Naive thymus-derived CD8-positive, alpha-beta T cell (primary cell): ENCODE measurements at regions of chr7 and their contacts with region 1.

Region 1: GRCh38 chr7:150368096-150368883 is at the start of gene REPIN1:
- DNase-seq: peak; percentile 66 to 87 (median 74)
- ATAC-seq: peak; percentile 43 to 54
- H3K4me3 Mint-ChIP-seq: peak within 1 kb of the TSS; percentile 89 to 98 (median 94)
- H3K27ac Mint-ChIP-seq: peak within 1 kb of the TSS; percentile 90 to 98 (median 96)
- H3K4me1 Mint-ChIP-seq: peaks cover 21 to 65% (median 57%) of the 10 kb centered on the region in 4 donors
- H3K27me3 Mint-ChIP-seq: no peaks in the 10 kb centered on the region
- polyA plus RNA-seq, gene REPIN1: 39.8 to 73.0 (median 49.8) TPM

Region 2: DNA sequence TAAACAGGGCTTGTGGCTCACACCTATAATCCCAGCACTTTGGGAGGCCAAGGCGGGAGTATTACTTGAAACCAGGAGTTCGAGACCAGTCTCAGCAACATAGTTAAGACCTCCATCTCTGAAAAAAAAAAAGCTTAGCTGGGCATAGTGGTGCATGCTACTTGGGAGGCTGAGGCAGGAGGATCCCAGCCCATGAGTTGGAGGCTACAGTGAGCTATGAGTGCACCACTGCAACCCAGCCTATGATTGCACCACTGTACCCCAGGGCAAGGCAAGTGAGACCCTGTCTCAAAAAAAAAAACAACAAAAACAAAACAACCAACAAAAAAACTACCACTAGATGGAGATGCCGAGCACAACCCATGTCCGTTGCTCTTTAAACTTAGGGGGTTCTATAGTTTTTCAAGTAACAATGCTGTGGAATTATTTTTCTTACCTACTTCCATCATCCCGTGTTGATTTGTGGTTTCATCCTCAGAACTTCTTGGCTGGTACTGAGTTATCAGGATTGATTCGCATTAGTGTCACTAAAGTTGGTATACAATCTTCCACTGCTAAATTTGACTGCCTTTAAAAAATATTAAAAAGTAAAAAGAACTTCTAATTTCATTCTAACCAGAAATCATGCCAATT is 11.9 kb before region 1 on chr7:
- POLR2A ChIA-PET with region 1: interaction called, 41 read pairs
- DNase-seq: peak in 3 of 10 donors; percentile 62 to 64 (median 63)
- ATAC-seq: peak in 1 of 2 donors; percentile 19
- H3K4me3 Mint-ChIP-seq: peak overlapping the region in 5 of 10 donors; percentile 8 to 34 (median 18)
- H3K27ac Mint-ChIP-seq: peak overlapping the region in 9 of 10 donors; percentile 4 to 79 (median 63)
- H3K4me1 Mint-ChIP-seq: peaks cover 21 to 40% (median 35%) of the 10 kb centered on the region in 4 donors
- H3K27me3 Mint-ChIP-seq: no peaks in the 10 kb centered on the region

Region 3: GRCh38 chr7:150378853-150379440 is 10.7 kb after region 1 on chr7 and contains the start of gene ZNF775:
- POLR2A ChIA-PET with region 1: interaction called, 37 read pairs
- DNase-seq: peak; percentile 88 to 94 (median 91)
- ATAC-seq: peak; percentile 93 to 96
- H3K4me3 Mint-ChIP-seq: peak within 1 kb of the TSS; percentile 82 to 95 (median 90)
- H3K27ac Mint-ChIP-seq: peak within 1 kb of the TSS; percentile 85 to 93 (median 90)
- H3K4me1 Mint-ChIP-seq: peaks cover 27 to 65% (median 60%) of the 10 kb centered on the region in 4 donors
- H3K27me3 Mint-ChIP-seq: no peaks in the 10 kb centered on the region
- polyA plus RNA-seq, gene ZNF775: 1.5 to 7.6 (median 3.1) TPM

Region 4: GRCh38 chr7:150404805-150405583 is 36.7 kb after region 1 on chr7:
- POLR2A ChIA-PET with region 1: interaction called, 96 read pairs
- DNase-seq: peak; percentile 62 to 82 (median 72)
- ATAC-seq: peak; percentile 80 to 81
- H3K4me3 Mint-ChIP-seq: peak overlapping the region; percentile 90 to 98 (median 98)
- H3K27ac Mint-ChIP-seq: peak overlapping the region; percentile 89 to 99 (median 98)
- H3K4me1 Mint-ChIP-seq: peaks cover 25 to 58% (median 41%) of the 10 kb centered on the region in 4 donors
- H3K27me3 Mint-ChIP-seq: no peaks in the 10 kb centered on the region